ENCODE measurements at regions of chr5 and their contacts with region 1.

Region 1: DNA sequence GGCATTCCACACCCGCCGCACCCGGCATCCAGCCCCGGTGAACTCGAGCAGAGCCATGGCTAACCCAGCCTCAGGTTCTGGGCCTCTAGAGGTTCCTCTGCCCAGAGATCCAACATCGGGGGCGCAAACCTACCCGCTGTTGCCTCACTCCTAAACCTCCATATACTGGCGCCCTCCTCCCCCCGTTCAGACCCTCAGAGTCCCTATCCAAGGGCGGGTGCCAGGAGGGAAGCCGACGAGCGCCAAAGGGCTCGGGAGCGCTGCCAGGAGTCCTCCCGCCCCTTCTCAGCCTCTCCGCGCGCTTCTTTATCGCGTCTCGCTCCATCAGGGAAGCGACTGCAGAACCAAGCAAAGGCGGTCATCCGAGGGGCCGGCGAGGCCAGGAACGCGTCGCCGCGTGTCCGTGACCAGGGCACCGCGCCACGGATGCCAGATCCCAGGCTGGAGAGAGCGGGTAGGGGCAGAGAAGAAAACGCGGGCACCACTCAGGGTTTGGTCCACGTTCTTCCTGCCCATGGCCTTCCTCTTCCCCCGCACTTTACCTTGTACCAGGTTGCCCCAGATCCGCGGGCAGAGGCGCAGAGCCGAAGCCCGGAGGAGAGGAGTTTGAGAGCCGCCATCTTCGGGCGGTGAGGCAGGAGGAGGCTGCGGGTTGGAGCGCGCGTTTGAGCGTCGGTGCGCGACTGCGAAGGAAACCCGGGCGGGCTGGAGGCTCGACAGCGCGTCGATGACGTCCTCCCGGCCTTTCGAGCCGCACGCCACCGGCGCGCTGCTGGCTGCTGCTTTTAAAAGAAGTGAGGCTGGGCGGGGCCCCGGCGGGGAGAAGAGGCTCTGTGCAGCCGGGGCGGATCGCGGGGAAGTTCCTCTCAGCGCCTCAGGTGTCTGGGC is at the start of gene OXCT1:
- DNase-seq: peak; percentile 80
- H3K4me3 ChIP-seq: peak within 1 kb of the TSS; percentile 58 to 76
- H3K27ac ChIP-seq: peak within 1 kb of the TSS; percentile 90 to 93
- H3K4me1 ChIP-seq: no peaks in the 10 kb centered on the region
- H3K27me3 ChIP-seq: no peaks in the 10 kb centered on the region
- CTCF ChIP-seq: peak in 2 of 4 experiments; percentile 8 to 23
- POLR2A ChIP-seq: peak; percentile 78 to 82
- total RNA-seq, gene OXCT1: 11.2 to 37.3 (median 27.0) TPM

Region 2: GRCh38 chr5:41392016-41392415 is 478.0 kb before region 1 on chr5:
- intact Hi-C with region 1: no loop called
- DNase-seq: no peak
- H3K4me3 ChIP-seq: no peak overlapping the region
- H3K27ac ChIP-seq: no peak overlapping the region
- H3K4me1 ChIP-seq: no peaks in the 10 kb centered on the region
- H3K27me3 ChIP-seq: no peaks in the 10 kb centered on the region
- CTCF ChIP-seq: no peak
- POLR2A ChIP-seq: no peak

Region 3: DNA sequence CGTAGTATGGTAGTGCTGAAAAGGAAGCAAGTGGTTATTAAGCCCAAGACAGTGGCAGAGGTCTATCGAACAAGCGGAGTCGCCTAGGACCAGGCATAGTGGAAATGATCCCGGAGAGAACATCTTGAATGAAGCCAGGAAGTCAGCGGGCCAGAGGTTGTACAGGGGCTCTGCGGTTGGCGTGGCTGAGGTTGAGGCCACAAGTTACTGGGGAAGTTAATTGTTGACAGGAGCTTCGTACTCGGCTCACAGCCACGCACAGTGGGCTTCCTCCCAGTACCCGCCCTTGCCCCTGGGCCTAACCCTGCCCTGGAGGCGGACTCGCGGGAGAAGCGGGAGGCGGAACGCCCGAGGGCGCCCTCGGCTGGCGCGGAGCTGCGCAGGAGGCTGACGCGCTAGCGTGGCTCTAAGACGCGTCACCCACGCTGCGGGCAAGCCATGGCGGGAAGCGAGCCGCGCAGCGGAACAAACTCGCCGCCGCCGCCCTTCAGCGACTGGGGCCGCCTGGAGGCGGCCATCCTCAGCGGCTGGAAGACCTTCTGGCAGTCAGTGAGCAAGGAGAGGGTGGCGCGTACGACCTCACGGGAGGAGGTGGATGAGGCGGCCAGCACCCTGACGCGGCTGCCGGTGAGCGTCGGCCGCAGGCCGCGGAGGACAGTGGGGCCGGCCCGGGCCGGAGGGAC is 55.0 kb after region 1 on chr5 and contains the start of gene FBXO4:
- intact Hi-C with region 1: loop called (anchors 10 kb)
- DNase-seq: peak; percentile 75 to 85
- H3K4me3 ChIP-seq: peak within 1 kb of the TSS; percentile 63 to 77
- H3K27ac ChIP-seq: peak within 1 kb of the TSS; percentile 90 to 95
- H3K4me1 ChIP-seq: no peaks in the 10 kb centered on the region
- H3K27me3 ChIP-seq: no peaks in the 10 kb centered on the region
- CTCF ChIP-seq: peak; percentile 53 to 73 (median 58)
- POLR2A ChIP-seq: peak in 1 of 2 donors; percentile 60
- total RNA-seq, gene FBXO4: 0.59 to 21.8 (median 15.5) TPM

Region 4: GRCh38 chr5:42228279-42228678 is 358.3 kb after region 1 on chr5:
- intact Hi-C with region 1: no loop called
- DNase-seq: no peak
- H3K4me3 ChIP-seq: no peak overlapping the region
- H3K27ac ChIP-seq: no peak overlapping the region
- H3K4me1 ChIP-seq: no peaks in the 10 kb centered on the region
- H3K27me3 ChIP-seq: no peaks in the 10 kb centered on the region
- CTCF ChIP-seq: no peak
- POLR2A ChIP-seq: no peak

Measured in uterus (tissue), 4 donors.